Caco-2 (cell line): ENCODE measurements at regions of chr3 and their contacts with region 1.

Region 1: GRCh38 chr3:183766745-183767606 is 58.4 kb downstream of the MAP6D1 start:
- DNase-seq: peak; percentile 79 to 80
- H3K4me3 ChIP-seq: no peak overlapping the region
- H3K4me3 Mint-ChIP-seq: no peak overlapping the region
- H3K27ac Mint-ChIP-seq: no peak overlapping the region
- H3K4me1 ChIP-seq: peaks cover 16% of the 10 kb centered on the region
- H3K4me1 Mint-ChIP-seq: peaks cover 15% of the 10 kb centered on the region
- H3K27me3 ChIP-seq: no peaks in the 10 kb centered on the region
- H3K27me3 Mint-ChIP-seq: no peaks in the 10 kb centered on the region
- CTCF ChIP-seq: peak; percentile 76 to 87

Region 2: GRCh38 chr3:183178629-183179549 is 588.1 kb before region 1 on chr3:
- CTCF ChIA-PET with region 1: no interaction called
- POLR2A ChIA-PET with region 1: no interaction called
- intact Hi-C with region 1: loop called (anchors 5 kb)
- DNase-seq: peak; percentile 55 to 68
- H3K4me3 ChIP-seq: peak overlapping the region; percentile 40
- H3K4me3 Mint-ChIP-seq: peak overlapping the region; percentile 74
- H3K27ac Mint-ChIP-seq: no peak overlapping the region
- H3K4me1 ChIP-seq: no peaks in the 10 kb centered on the region
- H3K4me1 Mint-ChIP-seq: no peaks in the 10 kb centered on the region
- H3K27me3 ChIP-seq: no peaks in the 10 kb centered on the region; the same call in 1 of the 2 replicates
- H3K27me3 Mint-ChIP-seq: peaks cover 7% of the 10 kb centered on the region
- CTCF ChIP-seq: peak in 1 of 2 experiments; percentile 48

Region 3: GRCh38 chr3:183385698-183386613 is 381.0 kb before region 1 on chr3:
- CTCF ChIA-PET with region 1: no interaction called
- POLR2A ChIA-PET with region 1: no interaction called
- intact Hi-C with region 1: loop called (anchors 5 kb)
- DNase-seq: peak; percentile 48 to 69
- H3K4me3 ChIP-seq: no peak overlapping the region
- H3K4me3 Mint-ChIP-seq: no peak overlapping the region
- H3K27ac Mint-ChIP-seq: no peak overlapping the region
- H3K4me1 ChIP-seq: 0 out of 2 replicates have a peak, but pooled peaks cover 3% of the 10 kb centered on the region
- H3K4me1 Mint-ChIP-seq: no peaks in the 10 kb centered on the region
- H3K27me3 ChIP-seq: no peaks in the 10 kb centered on the region
- H3K27me3 Mint-ChIP-seq: no peaks in the 10 kb centered on the region
- CTCF ChIP-seq: peak; percentile 67 to 69

Region 4: DNA sequence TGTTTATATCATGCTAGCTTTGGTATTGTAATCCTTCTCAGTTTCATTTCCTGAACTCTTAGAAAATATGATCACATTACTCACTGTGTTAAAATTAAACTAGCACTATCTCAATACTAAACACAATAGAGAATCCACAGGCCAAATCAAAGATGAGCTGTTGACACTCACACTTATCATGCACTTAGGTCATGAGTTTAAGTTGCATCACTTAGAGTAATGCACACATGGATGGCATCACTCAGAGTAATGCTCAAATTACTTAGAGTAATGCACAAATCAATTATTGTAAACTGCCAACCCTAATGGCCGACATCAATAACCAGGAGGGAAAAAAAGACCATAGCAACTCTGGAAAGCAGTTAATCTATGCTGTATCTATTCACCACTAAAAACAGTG is 298.6 kb before region 1 on chr3:
- CTCF ChIA-PET with region 1: no interaction called
- POLR2A ChIA-PET with region 1: no interaction called
- intact Hi-C with region 1: loop called (anchors 1 kb)
- DNase-seq: no peak
- H3K4me3 ChIP-seq: no peak overlapping the region
- H3K4me3 Mint-ChIP-seq: no peak overlapping the region
- H3K27ac Mint-ChIP-seq: no peak overlapping the region
- H3K4me1 ChIP-seq: peaks cover 21% of the 10 kb centered on the region; the same call in 1 of the 2 replicates
- H3K4me1 Mint-ChIP-seq: peaks cover 14% of the 10 kb centered on the region
- H3K27me3 ChIP-seq: no peaks in the 10 kb centered on the region
- H3K27me3 Mint-ChIP-seq: no peaks in the 10 kb centered on the region
- CTCF ChIP-seq: no peak

Region 5: GRCh38 chr3:183502237-183503181 is 264.5 kb before region 1 on chr3:
- CTCF ChIA-PET with region 1: interaction called, 8 read pairs
- POLR2A ChIA-PET with region 1: no interaction called
- intact Hi-C with region 1: loop called (anchors 1 kb)
- DNase-seq: no peak
- H3K4me3 ChIP-seq: no peak overlapping the region
- H3K4me3 Mint-ChIP-seq: no peak overlapping the region
- H3K27ac Mint-ChIP-seq: no peak overlapping the region
- H3K4me1 ChIP-seq: no peaks in the 10 kb centered on the region
- H3K4me1 Mint-ChIP-seq: no peaks in the 10 kb centered on the region
- H3K27me3 ChIP-seq: no peaks in the 10 kb centered on the region
- H3K27me3 Mint-ChIP-seq: no peaks in the 10 kb centered on the region
- CTCF ChIP-seq: peak in 1 of 2 experiments; percentile 43

Region 6: GRCh38 chr3:183560607-183561006 is 206.4 kb before region 1 on chr3:
- CTCF ChIA-PET with region 1: interaction called, 5 read pairs
- POLR2A ChIA-PET with region 1: no interaction called
- intact Hi-C with region 1: loop called (anchors 2 kb)
- DNase-seq: peak; percentile 51 to 58
- H3K4me3 ChIP-seq: no peak overlapping the region
- H3K4me3 Mint-ChIP-seq: no peak overlapping the region
- H3K27ac Mint-ChIP-seq: no peak overlapping the region
- H3K4me1 ChIP-seq: peaks cover 9% of the 10 kb centered on the region; the same call in 1 of the 2 replicates
- H3K4me1 Mint-ChIP-seq: peaks cover 9% of the 10 kb centered on the region
- H3K27me3 ChIP-seq: no peaks in the 10 kb centered on the region
- H3K27me3 Mint-ChIP-seq: no peaks in the 10 kb centered on the region
- CTCF ChIP-seq: peak; percentile 39 to 47

Region 7: GRCh38 chr3:183635431-183636220 is 131.3 kb before region 1 on chr3 and contains the start of gene KLHL24:
- CTCF ChIA-PET with region 1: interaction called, 4 read pairs
- POLR2A ChIA-PET with region 1: no interaction called
- intact Hi-C with region 1: loop called (anchors 5 kb)
- DNase-seq: peak; percentile 92 to 93
- H3K4me3 ChIP-seq: peak within 1 kb of the TSS; percentile 100
- H3K4me3 Mint-ChIP-seq: peak within 1 kb of the TSS; percentile 82
- H3K27ac Mint-ChIP-seq: peak within 1 kb of the TSS; percentile 84
- H3K4me1 ChIP-seq: no peaks in the 10 kb centered on the region
- H3K4me1 Mint-ChIP-seq: no peaks in the 10 kb centered on the region
- H3K27me3 ChIP-seq: no peaks in the 10 kb centered on the region
- H3K27me3 Mint-ChIP-seq: no peaks in the 10 kb centered on the region
- CTCF ChIP-seq: no peak
- total RNA-seq, gene KLHL24: 16.8 and 17.6 TPM in 2 replicates

Region 8: GRCh38 chr3:183734750-183735494 is 32.1 kb before region 1 on chr3:
- CTCF ChIA-PET with region 1: no interaction called
- POLR2A ChIA-PET with region 1: no interaction called
- intact Hi-C with region 1: no loop called
- DNase-seq: no peak
- H3K4me3 ChIP-seq: no peak overlapping the region
- H3K4me3 Mint-ChIP-seq: no peak overlapping the region
- H3K27ac Mint-ChIP-seq: no peak overlapping the region
- H3K4me1 ChIP-seq: no peaks in the 10 kb centered on the region
- H3K4me1 Mint-ChIP-seq: no peaks in the 10 kb centered on the region
- H3K27me3 ChIP-seq: no peaks in the 10 kb centered on the region
- H3K27me3 Mint-ChIP-seq: no peaks in the 10 kb centered on the region
- CTCF ChIP-seq: no peak